Activated CD8-positive, alpha-beta memory T cell treated with anti-CD3 and anti-CD28 coated beads, Interleukin-2, amount 10 ng/mL, durations not matched to agents 7 days and 5 days (primary cell): ENCODE measurements at regions of chr1 and their contacts with region 1.

Region 1: GRCh38 chr1:18581420-18581880 is 49.2 kb upstream of the PAX7 start:
- DNase-seq: peak; percentile 51
- ATAC-seq: peak; percentile 58
- H3K4me3 Mint-ChIP-seq: no peak overlapping the region
- H3K27ac Mint-ChIP-seq: no peak overlapping the region
- H3K4me1 Mint-ChIP-seq: no peaks in the 10 kb centered on the region
- H3K27me3 Mint-ChIP-seq: peaks cover 4% of the 10 kb centered on the region

Region 2: GRCh38 chr1:17661546-17662157 is 919.8 kb before region 1 on chr1:
- CTCF ChIA-PET with region 1: interaction called, 11 read pairs
- DNase-seq: peak; percentile 60
- ATAC-seq: peak; percentile 33
- H3K4me3 Mint-ChIP-seq: no peak overlapping the region
- H3K27ac Mint-ChIP-seq: no peak overlapping the region
- H3K4me1 Mint-ChIP-seq: no peaks in the 10 kb centered on the region
- H3K27me3 Mint-ChIP-seq: no peaks in the 10 kb centered on the region

Region 3: DNA sequence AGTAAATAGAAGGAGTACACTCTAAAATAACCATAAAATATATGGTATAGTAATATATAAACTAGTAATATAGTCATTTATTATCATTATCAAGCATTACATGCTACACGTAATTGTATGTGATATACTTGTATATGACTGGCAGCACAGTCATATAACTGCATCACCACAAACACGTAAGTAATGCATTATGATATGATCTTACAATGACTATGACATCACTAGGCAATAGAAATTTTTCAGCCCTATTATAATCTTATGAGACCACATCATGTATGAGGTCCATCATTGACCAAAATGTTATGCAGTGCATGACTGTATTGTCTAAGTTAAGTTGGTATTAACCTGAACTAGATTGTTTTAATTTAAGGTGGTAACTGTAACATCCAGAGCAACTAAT is 63.4 kb before region 1 on chr1:
- CTCF ChIA-PET with region 1: no interaction called
- DNase-seq: no peak
- ATAC-seq: no peak
- H3K4me3 Mint-ChIP-seq: no peak overlapping the region
- H3K27ac Mint-ChIP-seq: no peak overlapping the region
- H3K4me1 Mint-ChIP-seq: no peaks in the 10 kb centered on the region
- H3K27me3 Mint-ChIP-seq: peaks cover 5% of the 10 kb centered on the region

Region 4: DNA sequence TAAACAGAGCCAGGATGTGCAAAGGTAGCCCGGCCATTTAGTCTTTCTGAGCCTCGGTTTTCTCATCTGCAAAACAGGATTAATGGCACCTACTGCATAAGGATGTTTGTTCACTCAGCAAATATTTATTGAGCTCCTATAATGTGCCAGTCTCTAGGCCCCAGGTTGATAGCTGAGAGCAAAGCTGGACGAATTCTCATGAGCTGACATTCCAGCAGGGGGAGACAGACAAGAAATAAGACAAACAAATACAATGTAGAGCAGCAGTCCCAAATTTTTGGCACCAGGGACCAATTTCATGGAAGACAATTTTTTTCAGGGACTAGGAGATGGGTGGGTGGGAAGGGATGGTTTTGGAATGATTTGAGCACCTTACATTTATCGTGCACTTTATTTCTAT is 25.1 kb before region 1 on chr1:
- CTCF ChIA-PET with region 1: interaction called, 15 read pairs
- DNase-seq: no peak
- ATAC-seq: no peak
- H3K4me3 Mint-ChIP-seq: no peak overlapping the region
- H3K27ac Mint-ChIP-seq: no peak overlapping the region
- H3K4me1 Mint-ChIP-seq: no peaks in the 10 kb centered on the region
- H3K27me3 Mint-ChIP-seq: peaks cover 37% of the 10 kb centered on the region

Region 5: GRCh38 chr1:18668796-18669404 is 87.5 kb after region 1 on chr1:
- CTCF ChIA-PET with region 1: no interaction called
- DNase-seq: no peak
- ATAC-seq: no peak
- H3K4me3 Mint-ChIP-seq: no peak overlapping the region
- H3K27ac Mint-ChIP-seq: no peak overlapping the region
- H3K4me1 Mint-ChIP-seq: no peaks in the 10 kb centered on the region
- H3K27me3 Mint-ChIP-seq: peaks cover 17% of the 10 kb centered on the region